ENCODE measurements at regions of chr18 and their contacts with region 1.

Region 1: DNA sequence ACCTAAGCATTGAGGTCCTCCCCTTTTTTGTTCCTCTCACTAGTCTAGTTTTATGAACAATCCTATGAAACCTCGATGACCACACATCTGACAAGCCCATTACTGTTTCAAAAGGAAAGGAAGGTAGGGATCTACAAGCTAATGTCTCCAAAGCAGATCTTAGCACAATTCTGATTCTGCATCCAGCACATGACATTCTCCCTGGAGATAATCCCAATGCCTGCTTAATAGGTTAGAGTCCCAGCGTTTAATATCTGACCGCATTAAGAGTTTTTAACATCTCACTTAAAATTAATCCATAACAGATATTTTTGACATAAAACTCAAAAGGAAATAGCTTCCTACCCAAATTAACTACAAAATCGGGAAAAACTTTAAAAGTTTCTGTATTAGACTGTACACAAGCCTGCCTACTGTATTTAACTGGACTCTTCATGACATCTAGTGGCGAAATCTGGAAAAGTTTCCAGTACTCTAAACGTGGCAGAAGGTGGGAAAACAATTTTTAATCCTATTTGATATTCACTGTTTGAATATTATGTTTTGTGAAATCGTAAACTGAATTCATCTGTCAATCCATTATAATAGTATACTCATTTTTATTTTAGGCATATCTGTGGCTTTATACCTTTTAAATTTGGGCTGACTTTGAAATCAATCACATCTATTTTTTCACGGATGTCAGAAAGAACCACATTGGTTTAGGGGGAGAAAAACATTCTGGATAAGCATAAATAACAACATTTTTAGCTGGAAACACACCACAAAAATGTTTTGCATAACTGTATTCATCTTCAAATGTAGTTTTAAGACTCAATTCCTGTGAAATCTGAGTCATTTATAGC is 62.4 kb downstream of the TXNL1 start:
- DNase-seq: no peak

Region 2: DNA sequence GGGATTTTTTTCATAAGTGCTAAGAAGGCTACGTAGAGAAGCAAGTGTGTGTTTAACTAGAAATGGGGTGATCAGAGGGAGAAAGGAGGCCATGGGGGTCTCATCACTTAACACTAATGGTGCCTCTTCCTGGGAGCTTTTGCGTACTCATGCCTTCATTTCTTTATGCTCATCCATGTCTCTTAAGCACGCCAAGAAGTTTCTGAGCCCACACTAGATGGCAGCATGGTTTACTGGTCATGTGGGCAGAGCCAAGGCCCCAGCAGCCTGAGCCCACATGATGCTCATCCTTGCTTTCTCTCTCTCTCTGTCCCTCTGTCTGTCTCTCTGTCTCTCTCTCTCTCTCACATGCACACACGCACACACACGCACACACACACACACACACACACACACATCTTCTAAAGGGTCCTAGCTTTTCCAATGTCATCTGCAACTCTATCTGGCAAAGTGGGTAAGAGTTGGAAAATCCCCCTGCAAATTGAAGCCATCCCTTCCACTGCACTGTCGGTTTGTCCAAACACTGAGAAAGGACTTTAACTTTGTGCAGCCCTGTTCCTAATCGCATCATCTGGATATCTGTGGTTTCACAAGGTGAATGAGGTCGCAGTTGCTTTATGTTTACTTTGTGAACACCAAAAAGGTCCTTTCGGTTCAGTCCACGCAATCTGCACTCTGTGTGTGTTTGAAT is 1479.6 kb before region 1 on chr18:
- intact Hi-C with region 1: loop called (anchors 10 kb)
- DNase-seq: peak in 9 of 10 donors; percentile 34 to 90 (median 57)

Region 3: DNA sequence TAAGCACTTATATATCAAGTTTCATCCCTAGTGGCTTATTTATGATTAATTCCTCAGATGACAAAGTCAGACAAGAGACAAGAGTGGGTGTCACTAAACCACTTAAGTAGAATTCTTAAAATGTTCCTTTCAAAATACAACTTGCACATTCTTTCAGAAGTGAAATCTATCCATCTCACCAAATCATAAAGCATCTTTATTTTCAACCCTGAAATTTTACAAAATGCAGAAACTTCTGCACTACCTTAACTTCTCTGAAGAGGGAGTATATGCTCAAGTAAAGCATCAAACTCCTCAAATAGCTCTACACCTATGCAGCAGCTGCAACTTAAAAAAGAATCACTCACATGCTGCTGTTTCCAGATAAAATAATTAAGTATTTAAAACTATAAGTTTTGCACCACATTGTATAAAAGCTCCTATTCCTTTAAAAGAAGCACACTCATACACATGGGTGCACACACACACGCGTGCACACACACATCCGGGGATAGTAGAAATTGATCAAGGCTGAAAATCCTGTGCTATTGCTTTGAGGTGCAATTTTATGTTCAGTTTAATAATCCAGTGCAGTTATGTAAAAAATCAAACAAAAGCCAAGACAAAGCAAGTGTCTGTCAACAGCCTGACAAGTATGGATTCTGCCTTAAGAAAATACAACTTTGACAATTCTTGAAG is 1232.5 kb before region 1 on chr18:
- intact Hi-C with region 1: loop called (anchors 10 kb)
- DNase-seq: no peak

Region 4: DNA sequence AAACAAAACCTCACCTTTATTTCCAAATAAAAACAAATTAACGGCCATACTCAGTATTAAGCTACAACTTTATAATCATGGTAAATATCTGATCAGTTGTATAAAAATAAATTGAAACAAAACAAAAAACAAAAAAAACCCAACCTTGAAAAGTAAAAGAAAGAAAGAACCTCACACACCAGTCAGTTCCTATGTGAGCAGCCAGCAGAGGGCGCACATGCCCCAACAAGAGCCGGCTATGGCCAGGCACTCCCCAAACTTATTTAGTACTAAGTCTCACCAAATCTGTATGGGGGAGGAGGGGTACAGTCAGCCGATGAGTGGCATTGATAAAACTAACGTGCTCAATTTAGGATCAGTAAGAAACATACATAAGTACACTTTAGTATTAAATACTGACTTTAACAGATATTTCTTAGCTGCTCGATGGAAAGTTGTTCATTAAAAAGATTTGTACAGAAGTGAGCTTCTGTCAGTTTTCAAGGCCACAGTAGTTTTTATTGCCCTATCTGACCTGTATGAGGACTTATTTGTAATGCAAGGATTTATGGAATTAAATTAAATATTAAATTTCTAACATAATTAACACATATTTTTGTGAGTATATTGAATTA is 1160.7 kb before region 1 on chr18:
- intact Hi-C with region 1: loop called (anchors 5 kb)
- DNase-seq: peak; percentile 74 to 98 (median 90)

Region 5: GRCh38 chr18:55433648-55434047 is 1142.4 kb before region 1 on chr18:
- intact Hi-C with region 1: loop called (anchors 5 kb)
- DNase-seq: no peak

Region 6: DNA sequence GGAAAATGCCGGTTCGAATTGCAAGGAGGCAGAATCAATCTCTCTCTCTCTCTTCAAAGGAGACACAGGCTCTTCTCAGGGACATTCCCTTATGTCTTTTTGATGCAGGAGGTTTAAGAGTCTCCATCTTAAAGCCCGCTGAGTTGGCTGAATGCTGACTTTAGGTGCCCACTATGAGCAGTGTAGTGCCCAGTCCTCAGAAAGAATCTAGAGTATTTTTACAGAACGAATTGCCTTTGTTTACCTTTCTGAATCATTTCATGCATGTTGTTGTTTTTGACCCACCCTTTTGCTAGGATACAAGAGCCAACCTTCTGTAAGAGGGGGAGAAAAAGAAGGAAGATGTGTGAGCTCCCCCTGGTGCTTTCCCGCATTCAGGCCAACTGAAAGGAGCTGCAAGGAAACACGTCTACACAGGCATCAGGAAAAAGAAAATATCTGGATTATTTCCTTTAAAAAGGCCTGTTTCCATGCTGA is 794.5 kb before region 1 on chr18:
- intact Hi-C with region 1: loop called (anchors 10 kb)
- DNase-seq: peak in 9 of 10 donors; percentile 35 to 94 (median 64)

Region 7: GRCh38 chr18:55907453-55908175 is 668.4 kb before region 1 on chr18:
- intact Hi-C with region 1: no loop called
- DNase-seq: no peak